AG04449 (cell line): ENCODE measurements at regions of chr4 and their contacts with region 1.

Region 1: DNA sequence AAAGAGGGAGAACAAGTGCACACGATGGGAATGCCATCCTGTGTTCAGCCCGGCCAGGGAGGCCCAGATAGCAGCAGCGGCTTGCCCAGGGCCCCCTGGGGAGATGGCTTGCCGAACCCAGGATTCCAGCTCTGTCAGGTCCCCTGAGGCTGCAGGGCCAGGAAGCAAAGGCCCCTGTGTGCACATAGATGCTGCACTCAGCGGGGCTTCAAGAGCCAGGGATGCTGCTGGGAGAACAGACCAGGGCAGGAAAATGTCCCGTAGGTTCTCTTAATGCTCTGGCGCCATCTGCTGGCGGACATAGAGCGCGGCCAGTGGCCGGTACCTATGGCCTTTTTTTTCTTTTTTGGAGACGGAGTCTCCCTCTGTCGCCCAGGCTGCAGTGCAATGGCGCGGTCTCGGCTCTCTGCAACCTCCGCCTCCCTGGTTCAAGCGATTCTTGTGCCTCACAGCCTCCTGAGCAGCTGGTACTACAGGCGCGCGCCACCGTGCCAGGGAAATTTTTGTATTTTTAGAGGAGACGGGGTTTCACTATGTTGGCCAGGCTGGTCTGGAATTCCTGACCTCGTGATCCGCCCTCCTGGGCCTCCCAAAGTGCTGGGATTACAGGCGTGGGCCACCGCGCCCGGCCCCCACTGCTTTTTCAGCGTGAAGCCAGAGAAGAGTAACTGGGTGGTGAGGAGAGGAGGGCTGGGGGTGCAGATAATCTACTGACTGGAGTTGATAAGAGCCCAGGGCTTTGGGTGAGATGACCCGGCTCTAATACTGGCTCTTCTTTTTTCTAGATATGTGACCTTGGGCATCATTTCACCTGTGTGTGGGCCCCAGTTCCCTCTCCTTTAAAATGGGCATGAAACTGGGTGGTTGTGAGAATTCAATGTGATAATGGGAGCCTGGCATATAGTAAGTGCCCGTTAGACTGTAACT is 22.5 kb downstream of the MED28 start:
- DNase-seq: no peak
- H3K4me3 ChIP-seq: no peak overlapping the region
- CTCF ChIP-seq: peak; percentile 80

Region 2: DNA sequence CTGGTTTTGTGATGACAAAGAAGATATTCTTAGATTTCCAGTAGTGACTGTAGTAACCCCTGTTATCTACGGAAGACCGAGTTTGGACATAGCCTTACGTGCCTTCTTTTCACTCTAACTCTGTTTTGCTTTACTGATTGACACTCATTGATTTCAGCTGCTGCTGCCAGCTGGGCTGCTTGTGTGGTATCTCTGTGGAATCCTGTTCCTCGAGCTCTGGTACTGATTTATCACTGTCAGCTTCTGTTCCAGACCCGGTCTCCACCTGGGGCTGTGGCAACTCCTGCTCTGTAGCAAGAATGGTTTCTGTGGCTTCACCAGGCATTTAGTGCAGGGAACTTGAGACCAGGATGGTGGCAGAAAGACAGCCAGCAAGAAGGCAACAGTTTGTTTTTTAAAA is 84.5 kb before region 1 on chr4:
- CTCF ChIA-PET with region 1: interaction called, 105 read pairs
- POLR2A ChIA-PET with region 1: no interaction called
- DNase-seq: no peak
- H3K4me3 ChIP-seq: no peak overlapping the region
- CTCF ChIP-seq: no peak

Region 3: DNA sequence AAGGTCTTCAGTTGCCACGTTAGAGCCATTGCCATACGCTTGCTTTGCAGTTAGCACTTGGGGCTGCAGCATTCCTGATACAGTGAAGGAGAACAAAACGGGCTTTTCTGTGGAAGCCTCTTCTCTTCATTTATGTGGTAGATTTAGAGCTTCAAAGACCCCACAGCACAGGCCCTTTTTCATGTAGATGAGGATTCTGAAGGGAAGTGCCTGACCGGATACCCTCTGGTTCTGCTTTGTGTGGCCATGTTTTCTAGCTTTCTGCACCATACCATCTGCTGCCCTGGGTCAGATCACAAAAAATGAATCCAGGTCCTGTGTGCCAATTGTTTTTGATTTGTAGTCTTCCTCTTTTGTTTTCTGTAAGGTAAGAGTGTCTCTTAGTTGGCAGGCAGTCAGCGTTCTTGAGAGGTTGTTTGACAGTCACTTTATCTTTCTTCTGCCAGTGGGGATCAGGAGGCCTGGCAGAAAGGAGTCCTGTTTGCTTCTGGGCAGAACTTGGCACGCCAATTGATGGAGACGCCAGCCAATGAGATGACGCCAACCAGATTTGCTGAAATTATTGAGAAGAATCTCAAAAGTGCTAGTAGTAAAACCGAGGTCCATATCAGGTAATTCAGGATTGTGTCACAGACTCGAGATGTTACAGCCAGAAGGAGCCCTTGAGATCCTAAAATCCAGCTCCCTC is 52.3 kb before region 1 on chr4:
- CTCF ChIA-PET with region 1: no interaction called
- POLR2A ChIA-PET with region 1: no interaction called
- DNase-seq: no peak
- H3K4me3 ChIP-seq: no peak overlapping the region
- CTCF ChIP-seq: no peak

Region 4: DNA sequence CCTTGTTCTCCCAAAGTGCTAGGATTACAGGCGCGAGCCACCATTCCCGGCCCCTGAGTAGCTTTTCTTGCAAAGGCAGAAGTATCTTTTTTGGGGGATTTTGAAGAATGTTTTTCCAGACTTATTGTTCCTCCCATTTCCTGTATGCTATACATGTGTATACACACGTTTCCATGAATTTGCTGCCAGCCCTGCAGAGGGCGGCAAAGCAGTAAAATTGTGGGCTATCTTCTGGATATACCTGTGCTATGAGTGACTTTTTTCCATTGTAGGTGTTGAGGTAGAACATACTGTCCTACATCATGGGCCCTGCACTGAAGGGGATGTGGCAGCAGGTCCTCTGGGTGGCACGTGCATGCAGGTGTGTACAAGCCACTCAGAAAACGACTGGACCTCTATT is 39.4 kb before region 1 on chr4:
- CTCF ChIA-PET with region 1: interaction called, 11 read pairs
- POLR2A ChIA-PET with region 1: no interaction called
- DNase-seq: no peak
- H3K4me3 ChIP-seq: no peak overlapping the region
- CTCF ChIP-seq: peak; percentile 8

Region 5: GRCh38 chr4:17614416-17615299 is 22.3 kb before region 1 on chr4 and contains the start of gene MED28:
- CTCF ChIA-PET with region 1: interaction called, 23 read pairs
- POLR2A ChIA-PET with region 1: interaction called, 3 read pairs
- DNase-seq: peak; percentile 67
- H3K4me3 ChIP-seq: peak within 1 kb of the TSS; percentile 85
- CTCF ChIP-seq: no peak

Region 6: GRCh38 chr4:17624821-17625220 is 12.1 kb before region 1 on chr4:
- CTCF ChIA-PET with region 1: interaction called, 22 read pairs
- POLR2A ChIA-PET with region 1: no interaction called
- DNase-seq: no peak
- H3K4me3 ChIP-seq: no peak overlapping the region
- CTCF ChIP-seq: no peak

Region 7: GRCh38 chr4:17647927-17648326 is 11.0 kb after region 1 on chr4:
- CTCF ChIA-PET with region 1: interaction called, 23 read pairs
- POLR2A ChIA-PET with region 1: interaction called, 3 read pairs
- DNase-seq: no peak
- H3K4me3 ChIP-seq: no peak overlapping the region
- CTCF ChIP-seq: no peak

Region 8: DNA sequence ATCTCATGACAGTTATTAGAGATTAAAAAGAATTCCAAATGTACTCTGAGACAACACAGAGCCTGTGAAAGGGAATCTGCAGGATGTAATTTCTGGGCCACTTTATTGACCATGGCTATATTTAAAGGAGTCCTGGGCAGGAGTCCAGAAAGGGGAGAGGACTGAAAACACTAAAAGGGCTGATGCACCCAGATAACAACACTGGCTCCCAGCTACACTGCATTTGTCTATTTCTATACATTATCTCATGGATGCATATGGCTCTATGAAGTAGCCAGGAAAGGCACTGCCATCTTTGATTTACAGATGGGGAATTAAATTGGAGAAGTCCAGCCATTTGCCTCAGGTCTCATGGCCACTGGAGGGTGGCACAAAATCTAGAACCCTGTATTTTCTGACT is 33.5 kb after region 1 on chr4:
- CTCF ChIA-PET with region 1: no interaction called
- POLR2A ChIA-PET with region 1: no interaction called
- DNase-seq: no peak
- H3K4me3 ChIP-seq: no peak overlapping the region
- CTCF ChIP-seq: no peak